H1 (cell line): ENCODE measurements at regions of chr11 and their contacts with region 1.

Region 1: GRCh38 chr11:110230377-110230776 is 66.0 kb downstream of the RDX start:
- DNase-seq: no peak
- H3K4me3 ChIP-seq: no peak overlapping the region
- H3K27ac ChIP-seq: no peak overlapping the region
- H3K4me1 ChIP-seq: no peaks in the 10 kb centered on the region
- H3K27me3 ChIP-seq: no peaks in the 10 kb centered on the region
- CTCF ChIP-seq: no peak
- EP300 ChIP-seq: no peak
- POLR2A ChIP-seq: no peak
- RAD21 ChIP-seq: no peak

Region 2: DNA sequence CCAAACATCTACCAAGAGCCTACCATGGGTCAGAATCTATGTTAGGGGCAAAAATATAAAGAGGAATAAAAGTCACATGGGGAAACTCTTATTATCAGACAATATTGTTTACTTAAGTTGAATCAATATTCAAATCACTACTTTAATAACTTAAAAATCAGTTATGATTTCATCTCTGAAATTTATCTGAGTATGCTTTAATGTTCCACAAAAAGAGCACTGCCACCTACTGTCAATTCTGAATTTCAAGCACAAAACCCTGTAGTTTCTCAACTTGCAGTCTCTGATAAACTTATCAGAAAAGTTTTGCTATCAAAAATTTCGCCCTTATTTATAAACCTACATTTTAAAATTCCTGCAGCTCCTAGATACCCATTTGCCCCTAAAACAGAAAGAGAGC is 18.7 kb after region 1 on chr11:
- CTCF ChIA-PET with region 1: interaction called, 10 read pairs
- POLR2A ChIA-PET with region 1: no interaction called
- DNase-seq: no peak
- H3K4me3 ChIP-seq: no peak overlapping the region
- H3K27ac ChIP-seq: no peak overlapping the region
- H3K4me1 ChIP-seq: no peaks in the 10 kb centered on the region
- H3K27me3 ChIP-seq: no peaks in the 10 kb centered on the region
- CTCF ChIP-seq: no peak
- EP300 ChIP-seq: no peak
- POLR2A ChIP-seq: no peak
- RAD21 ChIP-seq: no peak

Region 3: DNA sequence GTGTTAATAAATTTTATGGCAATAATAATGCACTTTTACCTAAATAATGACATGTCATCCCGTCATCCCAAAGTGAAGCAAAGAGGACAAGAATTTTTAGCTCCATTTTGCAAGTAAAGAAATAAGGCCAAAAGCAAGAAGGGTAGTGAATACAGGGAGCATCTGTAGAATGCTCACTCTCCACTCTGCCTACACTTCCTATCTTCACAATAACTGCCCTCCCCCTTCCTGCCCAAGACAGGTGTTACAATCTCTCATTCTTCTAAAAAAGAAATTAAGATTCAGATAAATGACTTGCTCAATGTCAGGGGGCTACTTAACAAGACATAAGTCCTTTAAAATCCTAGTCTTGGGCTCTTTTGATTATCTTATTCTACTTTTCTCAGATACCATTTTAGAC is 57.2 kb after region 1 on chr11:
- CTCF ChIA-PET with region 1: no interaction called
- POLR2A ChIA-PET with region 1: no interaction called
- DNase-seq: no peak
- H3K4me3 ChIP-seq: no peak overlapping the region
- H3K27ac ChIP-seq: no peak overlapping the region
- H3K4me1 ChIP-seq: no peaks in the 10 kb centered on the region
- H3K27me3 ChIP-seq: no peaks in the 10 kb centered on the region
- CTCF ChIP-seq: no peak
- EP300 ChIP-seq: no peak
- POLR2A ChIP-seq: no peak
- RAD21 ChIP-seq: no peak

Region 4: GRCh38 chr11:110311783-110312579 is 81.6 kb after region 1 on chr11:
- CTCF ChIA-PET with region 1: no interaction called
- POLR2A ChIA-PET with region 1: no interaction called
- DNase-seq: no peak
- H3K4me3 ChIP-seq: no peak overlapping the region
- H3K27ac ChIP-seq: peak overlapping the region; percentile 38; the same call in 1 of the 2 replicates
- H3K4me1 ChIP-seq: peaks cover 0 to 12% (median 2%) of the 10 kb centered on the region in 4 experiments; a peak in 3 of 7 replicates
- H3K27me3 ChIP-seq: no peaks in the 10 kb centered on the region
- CTCF ChIP-seq: no peak
- EP300 ChIP-seq: no peak
- POLR2A ChIP-seq: no peak
- RAD21 ChIP-seq: no peak

Region 5: GRCh38 chr11:110362971-110363509 is 132.7 kb after region 1 on chr11:
- CTCF ChIA-PET with region 1: no interaction called
- POLR2A ChIA-PET with region 1: no interaction called
- DNase-seq: no peak
- H3K4me3 ChIP-seq: no peak overlapping the region
- H3K27ac ChIP-seq: 0 out of 2 replicates have a peak overlapping the region, but pooled peaks have one; percentile 1
- H3K4me1 ChIP-seq: peaks cover 0 to 6% (median 4%) of the 10 kb centered on the region in 4 experiments; a peak in 4 of 7 replicates
- H3K27me3 ChIP-seq: no peaks in the 10 kb centered on the region
- CTCF ChIP-seq: no peak
- EP300 ChIP-seq: no peak
- POLR2A ChIP-seq: no peak
- RAD21 ChIP-seq: no peak